Endothelial cell of umbilical vein (primary cell): ENCODE measurements at regions of chrX and their contacts with region 1.

Region 1: GRCh38 chrX:107672955-107673378 is 44.7 kb downstream of the PRPS1 start:
- DNase-seq: peak; percentile 60
- H3K4me3 ChIP-seq: no peak overlapping the region
- H3K27ac ChIP-seq: peak overlapping the region; percentile 74
- H3K4me1 ChIP-seq: peaks cover 25% of the 10 kb centered on the region
- H3K27me3 ChIP-seq: no peaks in the 10 kb centered on the region
- CTCF ChIP-seq: peak; percentile 60 to 72
- POLR2A ChIP-seq: no peak

Region 2: DNA sequence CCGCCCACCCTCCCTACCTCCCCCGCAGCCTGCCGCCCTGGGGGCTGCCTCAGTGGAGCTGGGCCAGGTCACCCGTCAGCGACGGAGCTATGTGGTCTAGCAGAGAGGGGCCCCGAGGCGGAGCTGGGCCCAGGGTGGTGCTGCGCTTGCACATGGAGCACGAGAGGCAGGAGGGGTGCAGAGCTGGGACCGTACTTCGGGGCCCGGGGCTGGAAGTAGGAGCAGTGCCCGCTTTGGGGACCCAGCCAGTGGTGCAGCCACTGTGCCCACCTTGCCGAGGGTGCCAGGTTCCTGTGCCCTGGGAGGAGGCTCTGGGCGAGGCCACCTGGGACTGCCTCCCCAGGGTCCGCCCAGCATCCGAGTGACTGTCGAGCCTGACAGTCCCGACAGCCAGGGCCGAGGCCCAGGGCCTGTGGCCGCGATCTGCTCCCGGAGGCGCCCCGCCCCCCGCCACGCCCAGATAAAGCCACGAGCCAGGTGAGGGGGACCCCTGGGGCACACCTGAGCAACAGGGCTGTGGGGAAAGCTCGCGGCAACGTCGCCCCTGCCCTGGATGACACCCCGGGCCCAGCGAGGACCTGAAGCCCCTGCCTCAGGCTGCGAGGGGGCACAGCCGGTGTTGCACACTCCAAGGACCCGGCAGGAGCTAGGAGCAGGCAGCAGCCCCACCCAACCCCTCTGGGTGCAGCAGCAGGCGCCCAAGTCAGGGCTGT is 349.0 kb before region 1 on chrX:
- CTCF ChIA-PET with region 1: no interaction called
- POLR2A ChIA-PET with region 1: no interaction called
- dilution Hi-C with region 1: no loop called
- intact Hi-C with region 1: no loop called
- DNase-seq: no peak
- H3K4me3 ChIP-seq: no peak overlapping the region
- H3K27ac ChIP-seq: no peak overlapping the region
- H3K4me1 ChIP-seq: no peaks in the 10 kb centered on the region
- H3K27me3 ChIP-seq: no peaks in the 10 kb centered on the region
- CTCF ChIP-seq: no peak
- POLR2A ChIP-seq: no peak

Region 3: GRCh38 chrX:107684956-107685385 is 12.0 kb after region 1 on chrX:
- CTCF ChIA-PET with region 1: interaction called, 19 read pairs
- POLR2A ChIA-PET with region 1: no interaction called
- dilution Hi-C with region 1: no loop called
- intact Hi-C with region 1: loop called (anchors 1 kb)
- DNase-seq: peak; percentile 83
- H3K4me3 ChIP-seq: no peak overlapping the region
- H3K27ac ChIP-seq: peak overlapping the region; percentile 14
- H3K4me1 ChIP-seq: peaks cover 41% of the 10 kb centered on the region
- H3K27me3 ChIP-seq: no peaks in the 10 kb centered on the region
- CTCF ChIP-seq: no peak
- POLR2A ChIP-seq: no peak

Region 4: DNA sequence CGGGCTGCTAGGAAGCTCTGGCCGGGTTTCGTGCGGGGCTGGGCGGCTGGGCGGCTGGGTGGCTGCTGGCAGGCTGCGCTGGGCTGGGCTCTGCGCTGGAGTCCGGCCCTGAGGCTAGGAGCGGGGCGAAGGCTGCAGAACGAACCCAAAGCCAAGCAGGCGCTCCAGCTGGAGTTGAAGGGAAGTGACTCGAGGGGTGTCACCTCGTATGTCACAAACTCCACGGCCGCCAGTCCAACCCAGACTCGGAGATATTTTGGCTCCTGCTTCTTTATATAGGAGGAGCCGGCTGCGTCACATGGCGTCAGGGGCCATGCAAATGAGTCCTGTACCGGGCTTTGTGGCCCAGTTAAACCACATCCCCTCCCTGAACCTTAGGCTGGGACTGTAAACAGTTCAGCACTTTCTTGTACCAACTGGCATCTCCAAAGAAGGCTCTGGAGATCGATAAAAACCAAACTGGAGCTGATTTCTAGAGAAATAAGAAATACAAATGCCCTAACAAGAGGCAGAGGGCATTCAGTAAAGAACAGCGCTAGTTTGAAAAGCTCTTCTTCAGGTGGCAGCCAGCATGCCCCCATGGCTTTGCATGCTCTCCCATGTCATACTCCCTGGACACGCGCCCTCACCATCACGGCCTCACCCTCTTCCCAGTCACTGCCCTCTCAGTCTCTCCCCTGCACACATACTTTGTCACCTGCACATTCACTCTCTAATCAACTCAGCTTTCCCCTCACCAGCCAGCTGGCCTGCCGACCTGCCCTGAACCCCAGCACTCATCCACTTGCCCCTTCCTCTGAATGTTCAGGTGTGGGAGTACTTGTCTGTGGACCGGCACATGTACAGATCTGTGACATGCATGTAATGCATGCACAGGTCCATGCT is 44.1 kb after region 1 on chrX:
- CTCF ChIA-PET with region 1: interaction called, 142 read pairs
- POLR2A ChIA-PET with region 1: interaction called, 40 read pairs
- dilution Hi-C with region 1: no loop called
- intact Hi-C with region 1: loop called (anchors 1 kb)
- DNase-seq: peak; percentile 84
- H3K4me3 ChIP-seq: peak overlapping the region; percentile 49 to 84 (median 58)
- H3K27ac ChIP-seq: peak overlapping the region; percentile 77
- H3K4me1 ChIP-seq: peaks cover 11% of the 10 kb centered on the region
- H3K27me3 ChIP-seq: no peaks in the 10 kb centered on the region
- CTCF ChIP-seq: no peak
- POLR2A ChIP-seq: peak; percentile 93

Region 5: DNA sequence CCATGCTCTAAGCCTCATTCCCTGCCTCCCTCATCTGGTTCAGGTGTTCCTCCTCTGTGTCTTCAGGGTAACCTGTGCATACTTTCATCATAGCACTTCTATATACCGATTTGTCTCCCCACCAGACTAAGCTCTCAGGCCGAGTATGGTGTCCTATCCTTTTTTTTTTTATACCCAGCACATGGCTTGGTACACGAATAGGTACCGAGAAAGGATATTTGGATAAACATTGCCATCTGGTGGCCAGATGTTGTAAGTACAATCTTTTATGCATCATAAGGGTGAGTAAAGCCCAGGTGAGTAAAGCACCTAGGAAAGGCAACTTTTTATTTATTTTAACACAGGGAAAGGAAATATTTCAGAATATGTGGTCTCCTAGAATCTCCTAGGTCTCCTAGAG is 221.1 kb after region 1 on chrX:
- CTCF ChIA-PET with region 1: interaction called, 8 read pairs
- POLR2A ChIA-PET with region 1: no interaction called
- dilution Hi-C with region 1: no loop called
- intact Hi-C with region 1: loop called (anchors 5 kb)
- DNase-seq: peak; percentile 47
- H3K4me3 ChIP-seq: no peak overlapping the region
- H3K27ac ChIP-seq: no peak overlapping the region
- H3K4me1 ChIP-seq: no peaks in the 10 kb centered on the region
- H3K27me3 ChIP-seq: no peaks in the 10 kb centered on the region
- CTCF ChIP-seq: peak in 1 of 2 donors; percentile 15
- POLR2A ChIP-seq: no peak

Region 6: GRCh38 chrX:108036298-108036973 is 363.5 kb after region 1 on chrX:
- CTCF ChIA-PET with region 1: no interaction called
- POLR2A ChIA-PET with region 1: no interaction called
- dilution Hi-C with region 1: no loop called
- intact Hi-C with region 1: no loop called
- DNase-seq: peak; percentile 88
- H3K4me3 ChIP-seq: no peak overlapping the region
- H3K27ac ChIP-seq: peak overlapping the region; percentile 94
- H3K4me1 ChIP-seq: peaks cover 14% of the 10 kb centered on the region
- H3K27me3 ChIP-seq: no peaks in the 10 kb centered on the region
- CTCF ChIP-seq: no peak
- POLR2A ChIP-seq: no peak

Region 7: GRCh38 chrX:108131471-108131870 is 458.5 kb after region 1 on chrX:
- CTCF ChIA-PET with region 1: no interaction called
- POLR2A ChIA-PET with region 1: no interaction called
- dilution Hi-C with region 1: no loop called
- intact Hi-C with region 1: loop called (anchors 2 kb)
- DNase-seq: peak; percentile 88
- H3K4me3 ChIP-seq: no peak overlapping the region
- H3K27ac ChIP-seq: peak overlapping the region; percentile 97
- H3K4me1 ChIP-seq: peaks cover 34% of the 10 kb centered on the region
- H3K27me3 ChIP-seq: no peaks in the 10 kb centered on the region
- CTCF ChIP-seq: no peak
- POLR2A ChIP-seq: peak; percentile 59

Region 8: DNA sequence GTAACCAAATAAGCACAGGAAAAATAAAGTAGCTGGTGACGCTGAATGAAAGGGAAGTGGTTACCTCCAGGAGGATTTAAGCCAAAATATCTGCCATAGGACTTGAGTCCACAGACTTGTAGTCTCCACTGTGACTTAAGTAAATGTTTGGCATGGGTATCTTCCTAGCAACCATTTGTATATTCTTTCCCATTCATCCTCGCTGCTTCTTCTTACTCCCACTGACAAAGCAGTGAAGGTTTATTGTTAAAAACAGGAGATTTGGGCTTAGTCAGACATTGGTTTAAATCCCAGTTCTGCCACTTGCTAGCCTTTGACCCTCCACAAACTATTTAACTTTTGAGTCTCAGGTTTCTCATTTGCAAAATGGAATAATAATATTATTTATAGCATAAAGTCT is 742.9 kb after region 1 on chrX:
- CTCF ChIA-PET with region 1: no interaction called
- POLR2A ChIA-PET with region 1: no interaction called
- dilution Hi-C with region 1: no loop called
- intact Hi-C with region 1: no loop called
- DNase-seq: peak; percentile 1
- H3K4me3 ChIP-seq: no peak overlapping the region
- H3K27ac ChIP-seq: no peak overlapping the region
- H3K4me1 ChIP-seq: peaks cover 5% of the 10 kb centered on the region
- H3K27me3 ChIP-seq: no peaks in the 10 kb centered on the region
- CTCF ChIP-seq: no peak
- POLR2A ChIP-seq: no peak